Mammary epithelial cell (primary cell): ENCODE measurements at regions of chr3 and their contacts with region 1.

Region 1: GRCh38 chr3:72447059-72447946 is 400.9 kb downstream of the SHQ1 start:
- DNase-seq: peak; percentile 83
- H3K4me3 ChIP-seq: peak overlapping the region; percentile 33 to 92 (median 84)
- H3K27ac ChIP-seq: peak overlapping the region; percentile 89
- H3K4me1 ChIP-seq: peaks cover 18% of the 10 kb centered on the region
- H3K27me3 ChIP-seq: no peaks in the 10 kb centered on the region
- CTCF ChIP-seq: no peak

Region 2: DNA sequence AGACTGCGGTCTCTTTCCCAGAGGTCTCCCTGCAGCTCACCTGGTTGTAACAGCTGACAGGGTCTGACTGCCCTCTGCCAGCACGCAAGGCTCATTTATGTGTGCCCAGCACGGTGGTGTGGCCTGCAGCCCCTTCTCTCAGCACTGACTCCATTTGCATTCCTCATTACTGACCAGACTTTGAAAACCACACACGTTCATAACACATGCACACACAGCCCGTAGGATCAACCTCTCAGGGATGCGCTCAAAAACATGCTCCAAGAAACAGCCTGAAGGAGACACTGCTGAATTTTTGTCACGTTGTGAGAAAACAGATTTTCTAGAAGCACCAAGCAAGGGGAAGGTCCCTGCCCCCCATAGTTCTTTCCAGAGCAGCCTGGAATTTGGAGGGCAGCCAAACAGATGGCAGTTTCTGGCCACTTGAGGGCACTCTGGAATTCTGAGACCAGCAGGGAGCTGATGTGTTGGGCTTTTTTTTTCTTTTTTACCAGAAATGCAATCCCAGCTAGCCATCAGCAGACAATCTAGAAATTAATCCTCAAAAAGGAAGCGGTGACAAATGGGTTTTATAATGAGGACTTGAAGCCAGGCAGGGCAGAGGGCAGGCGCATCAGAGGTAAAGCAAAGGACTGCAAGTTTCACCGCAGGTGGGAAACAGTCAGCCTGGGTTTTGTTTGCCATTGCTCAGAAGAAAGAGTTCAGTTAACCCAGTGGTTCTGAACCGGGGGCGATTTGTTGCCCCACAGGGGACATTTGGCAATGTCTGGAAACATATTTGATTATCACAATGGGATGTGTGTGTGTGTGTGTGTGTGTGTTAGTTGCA is 491.8 kb before region 1 on chr3:
- CTCF ChIA-PET with region 1: no interaction called
- dilution Hi-C with region 1: no loop called
- in situ Hi-C with region 1: no loop called
- intact Hi-C with region 1: loop called (anchors 5 kb)
- DNase-seq: peak; percentile 48
- H3K4me3 ChIP-seq: no peak overlapping the region
- H3K27ac ChIP-seq: no peak overlapping the region
- H3K4me1 ChIP-seq: no peaks in the 10 kb centered on the region
- H3K27me3 ChIP-seq: no peaks in the 10 kb centered on the region
- CTCF ChIP-seq: peak; percentile 65 to 81

Region 3: GRCh38 chr3:72339116-72340030 is 107.9 kb before region 1 on chr3:
- CTCF ChIA-PET with region 1: no interaction called
- dilution Hi-C with region 1: no loop called
- in situ Hi-C with region 1: loop called in 1 of 2 experiments (anchors 10 kb)
- intact Hi-C with region 1: loop called (anchors 2 kb)
- DNase-seq: peak; percentile 98
- H3K4me3 ChIP-seq: no peak overlapping the region
- H3K27ac ChIP-seq: peak overlapping the region; percentile 72
- H3K4me1 ChIP-seq: peaks cover 41% of the 10 kb centered on the region
- H3K27me3 ChIP-seq: no peaks in the 10 kb centered on the region
- CTCF ChIP-seq: no peak

Region 4: GRCh38 chr3:72413228-72413627 is 34.1 kb before region 1 on chr3:
- CTCF ChIA-PET with region 1: no interaction called
- dilution Hi-C with region 1: no loop called
- in situ Hi-C with region 1: no loop called
- intact Hi-C with region 1: no loop called
- DNase-seq: peak; percentile 39
- H3K4me3 ChIP-seq: no peak overlapping the region
- H3K27ac ChIP-seq: no peak overlapping the region
- H3K4me1 ChIP-seq: peaks cover 24% of the 10 kb centered on the region
- H3K27me3 ChIP-seq: no peaks in the 10 kb centered on the region
- CTCF ChIP-seq: no peak

Region 5: GRCh38 chr3:72492240-72492639 is 44.9 kb after region 1 on chr3:
- CTCF ChIA-PET with region 1: no interaction called
- dilution Hi-C with region 1: no loop called
- in situ Hi-C with region 1: no loop called
- intact Hi-C with region 1: loop called (anchors 2 kb)
- DNase-seq: peak; percentile 94
- H3K4me3 ChIP-seq: no peak overlapping the region
- H3K27ac ChIP-seq: no peak overlapping the region
- H3K4me1 ChIP-seq: peaks cover 34% of the 10 kb centered on the region
- H3K27me3 ChIP-seq: no peaks in the 10 kb centered on the region
- CTCF ChIP-seq: no peak

Region 6: GRCh38 chr3:72629191-72629631 is 181.9 kb after region 1 on chr3:
- CTCF ChIA-PET with region 1: no interaction called
- dilution Hi-C with region 1: no loop called
- in situ Hi-C with region 1: no loop called
- intact Hi-C with region 1: loop called (anchors 1 kb)
- DNase-seq: peak; percentile 72
- H3K4me3 ChIP-seq: no peak overlapping the region
- H3K27ac ChIP-seq: peak overlapping the region; percentile 5
- H3K4me1 ChIP-seq: peaks cover 51% of the 10 kb centered on the region
- H3K27me3 ChIP-seq: no peaks in the 10 kb centered on the region
- CTCF ChIP-seq: no peak